ENCODE measurements at regions of chr12 and their contacts with region 1.

Region 1: DNA sequence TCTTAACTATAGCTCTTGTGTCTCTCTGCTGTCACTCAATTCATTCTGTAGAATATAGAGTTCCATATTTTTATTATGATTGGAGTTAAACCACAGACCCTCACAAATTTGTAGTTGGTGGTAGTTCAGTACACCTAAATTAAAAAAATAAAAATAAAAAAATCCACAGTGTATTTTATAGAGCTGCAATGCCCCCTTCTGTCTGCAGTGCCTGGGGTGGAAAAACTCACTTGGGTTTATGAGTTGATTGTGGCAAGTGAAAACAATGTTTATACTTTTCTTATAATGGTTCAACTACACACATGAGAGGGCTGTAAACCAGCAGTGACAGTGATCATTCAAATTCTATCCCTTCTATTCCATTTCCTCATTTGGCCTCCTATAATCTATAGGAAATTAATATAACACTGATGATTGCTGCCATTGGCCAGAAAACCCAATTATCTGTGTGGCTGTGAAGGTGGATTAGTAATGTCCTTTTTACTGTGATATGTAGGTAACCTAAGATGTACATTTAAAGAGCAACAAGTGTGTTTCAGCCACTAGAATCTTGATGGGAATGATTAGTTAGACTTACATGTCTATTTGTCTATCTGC is 166.9 kb upstream of the LRIG3 start:
- DNase-seq: no peak
- H3K4me3 ChIP-seq: no peak overlapping the region
- H3K27ac ChIP-seq: no peak overlapping the region
- H3K4me1 ChIP-seq: peaks cover 0 to 37% (median 7%) of the 10 kb centered on the region in 4 donors
- H3K27me3 ChIP-seq: no peaks in the 10 kb centered on the region
- CTCF ChIP-seq: peak in 3 of 4 experiments; percentile 35 to 56 (median 43)
- EP300 ChIP-seq: no peak
- POLR2A ChIP-seq: no peak

Region 2: GRCh38 chr12:58346032-58346632 is 741.0 kb before region 1 on chr12:
- intact Hi-C with region 1: loop called (anchors 10 kb)
- DNase-seq: no peak
- H3K4me3 ChIP-seq: no peak overlapping the region
- H3K27ac ChIP-seq: no peak overlapping the region
- H3K4me1 ChIP-seq: no peaks in the 10 kb centered on the region
- H3K27me3 ChIP-seq: no peaks in the 10 kb centered on the region
- CTCF ChIP-seq: peak; percentile 38 to 77 (median 61)
- EP300 ChIP-seq: no peak
- POLR2A ChIP-seq: no peak

Region 3: GRCh38 chr12:58540480-58541299 is 546.5 kb before region 1 on chr12:
- intact Hi-C with region 1: loop called (anchors 5 kb)
- DNase-seq: peak; percentile 90
- H3K4me3 ChIP-seq: no peak overlapping the region
- H3K27ac ChIP-seq: peak overlapping the region in 3 of 4 donors; percentile 1 to 16 (median 7)
- H3K4me1 ChIP-seq: peaks cover 0 to 24% (median 15%) of the 10 kb centered on the region in 4 donors
- H3K27me3 ChIP-seq: no peaks in the 10 kb centered on the region
- CTCF ChIP-seq: peak; percentile 56 to 70 (median 65)
- EP300 ChIP-seq: no peak
- POLR2A ChIP-seq: no peak

Region 4: DNA sequence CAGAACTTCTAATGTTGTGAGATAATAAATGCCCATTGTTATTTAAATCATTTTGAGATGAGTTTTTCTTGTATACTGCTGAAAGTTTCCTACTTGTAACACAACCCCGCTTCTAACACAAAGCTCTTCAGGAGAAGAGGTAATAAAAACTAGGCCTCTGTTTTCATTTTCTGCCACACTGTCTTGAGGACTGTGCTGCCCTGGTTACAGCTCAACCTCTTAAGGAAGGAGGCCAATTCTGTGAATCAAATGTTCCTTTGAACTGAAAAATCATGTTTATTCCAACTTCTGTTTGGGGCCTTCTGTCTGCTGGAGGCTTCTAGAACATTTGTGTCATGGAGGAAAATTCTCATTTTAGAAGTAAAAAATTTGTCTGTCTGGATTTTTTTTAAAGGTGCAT is 267.2 kb before region 1 on chr12:
- intact Hi-C with region 1: loop called (anchors 10 kb)
- DNase-seq: no peak
- H3K4me3 ChIP-seq: no peak overlapping the region
- H3K27ac ChIP-seq: peak overlapping the region in 3 of 4 donors; percentile 41 to 66 (median 41)
- H3K4me1 ChIP-seq: peaks cover 0 to 14% (median 5%) of the 10 kb centered on the region in 4 donors
- H3K27me3 ChIP-seq: no peaks in the 10 kb centered on the region
- CTCF ChIP-seq: no peak
- EP300 ChIP-seq: no peak
- POLR2A ChIP-seq: no peak

Region 5: DNA sequence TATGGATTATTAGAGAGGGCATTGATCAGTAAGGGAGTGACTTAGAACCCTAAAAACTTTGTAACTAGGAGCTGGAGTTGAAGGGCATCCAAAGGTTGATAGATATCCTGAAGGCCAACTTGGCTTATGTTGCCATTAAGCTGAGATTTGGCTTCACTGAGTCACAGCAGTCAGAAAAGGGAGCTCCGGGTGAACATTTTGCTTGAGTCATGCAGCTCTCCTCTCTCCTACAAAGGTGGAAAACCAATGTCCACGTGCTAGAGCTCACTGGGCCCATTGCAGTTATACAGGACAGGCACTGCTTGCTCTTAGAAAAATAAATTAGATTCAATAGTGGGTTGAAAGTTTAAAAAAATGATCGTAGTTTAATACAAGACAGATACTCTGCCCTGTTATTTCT is 79.6 kb before region 1 on chr12:
- intact Hi-C with region 1: no loop called
- DNase-seq: no peak
- H3K4me3 ChIP-seq: no peak overlapping the region
- H3K27ac ChIP-seq: no peak overlapping the region
- H3K4me1 ChIP-seq: no peaks in the 10 kb centered on the region
- H3K27me3 ChIP-seq: no peaks in the 10 kb centered on the region
- CTCF ChIP-seq: no peak
- EP300 ChIP-seq: no peak
- POLR2A ChIP-seq: no peak

Region 6: DNA sequence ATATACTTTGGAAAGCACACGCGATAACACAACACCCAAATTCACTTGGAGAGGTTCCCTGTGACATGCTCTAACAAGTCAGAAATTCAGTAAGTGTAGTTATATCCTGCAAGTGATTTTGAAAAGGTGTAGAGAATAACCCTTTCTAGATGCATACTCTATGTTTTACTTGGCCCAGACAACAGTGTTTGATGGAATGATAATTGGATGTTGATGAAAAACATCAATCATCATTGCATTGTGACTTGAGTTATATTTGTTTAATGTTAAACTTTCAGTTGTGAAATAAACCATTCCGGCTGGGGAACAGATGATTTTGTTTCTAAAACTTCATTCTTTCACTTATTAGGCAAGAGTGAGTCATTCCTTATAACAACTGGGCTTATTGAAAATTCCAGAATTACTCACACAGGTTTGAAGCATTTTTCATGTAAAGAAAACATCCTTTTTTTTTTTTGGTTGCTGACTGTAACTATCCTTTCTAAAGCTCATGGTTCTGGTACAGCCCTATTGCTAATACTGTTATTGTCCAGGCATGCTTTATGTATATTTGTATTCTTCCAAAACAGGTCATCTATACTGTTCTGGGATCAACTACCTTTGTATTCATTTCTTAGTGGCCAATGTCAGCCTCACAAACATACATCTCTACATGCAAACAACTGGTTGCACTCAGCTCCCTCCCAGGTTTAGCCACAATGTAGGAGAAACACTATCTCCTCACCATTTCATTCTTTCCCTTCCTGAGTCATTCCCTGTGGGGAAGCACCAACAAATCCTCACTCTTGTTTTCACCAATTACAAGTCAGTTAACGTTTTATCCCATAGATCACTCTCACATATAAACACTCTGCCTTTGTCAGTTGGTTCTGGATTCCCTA is 45.7 kb before region 1 on chr12:
- intact Hi-C with region 1: no loop called
- DNase-seq: no peak
- H3K4me3 ChIP-seq: no peak overlapping the region
- H3K27ac ChIP-seq: peak overlapping the region; percentile 8 to 79 (median 58)
- H3K4me1 ChIP-seq: peaks cover 0 to 19% (median 12%) of the 10 kb centered on the region in 4 donors
- H3K27me3 ChIP-seq: no peaks in the 10 kb centered on the region
- CTCF ChIP-seq: no peak
- EP300 ChIP-seq: no peak
- POLR2A ChIP-seq: no peak

Measured in sigmoid colon (tissue), 7 donors.